Activated CD8-positive, alpha-beta memory T cell treated with anti-CD3 and anti-CD28 coated beads, Interleukin-2, amount 10 ng/mL, durations not matched to agents 7 days and 5 days (primary cell): ENCODE measurements at regions of chr17 and their contacts with region 1.

Region 1: GRCh38 chr17:46002311-46002972 is 3.4 kb downstream of the STH start:
- DNase-seq: peak; percentile 80
- ATAC-seq: peak; percentile 94
- H3K4me3 Mint-ChIP-seq: no peak overlapping the region
- H3K27ac Mint-ChIP-seq: no peak overlapping the region
- H3K4me1 Mint-ChIP-seq: peaks cover 3% of the 10 kb centered on the region
- H3K27me3 Mint-ChIP-seq: no peaks in the 10 kb centered on the region

Region 2: GRCh38 chr17:45902892-45903346 is 99.5 kb before region 1 on chr17:
- CTCF ChIA-PET with region 1: no interaction called
- DNase-seq: no peak
- ATAC-seq: no peak
- H3K4me3 Mint-ChIP-seq: no peak overlapping the region
- H3K27ac Mint-ChIP-seq: no peak overlapping the region
- H3K4me1 Mint-ChIP-seq: peaks cover 14% of the 10 kb centered on the region
- H3K27me3 Mint-ChIP-seq: peaks cover 66% of the 10 kb centered on the region

Region 3: GRCh38 chr17:46020023-46020761 is 17.8 kb after region 1 on chr17:
- CTCF ChIA-PET with region 1: interaction called, 39 read pairs
- DNase-seq: peak; percentile 83
- ATAC-seq: peak; percentile 96
- H3K4me3 Mint-ChIP-seq: no peak overlapping the region
- H3K27ac Mint-ChIP-seq: peak overlapping the region; percentile 85
- H3K4me1 Mint-ChIP-seq: peaks cover 17% of the 10 kb centered on the region
- H3K27me3 Mint-ChIP-seq: no peaks in the 10 kb centered on the region

Region 4: DNA sequence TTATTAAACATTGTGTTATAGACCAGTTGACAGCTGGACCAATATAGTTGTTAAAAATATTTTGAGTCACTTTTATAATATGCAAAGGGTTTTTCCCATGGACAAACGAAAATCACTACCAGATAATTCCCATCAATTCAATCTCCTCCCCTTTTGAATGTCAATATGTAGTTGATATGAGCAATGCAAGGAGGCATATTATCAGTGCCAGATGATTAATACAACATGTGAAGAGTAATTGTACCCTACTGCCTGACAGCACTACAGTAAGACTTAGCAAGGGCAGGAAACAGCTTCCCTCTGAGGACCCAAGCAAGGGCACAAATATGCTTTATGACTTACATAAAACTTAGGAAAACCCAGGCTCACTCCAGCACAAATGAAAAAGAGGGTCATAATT is 173.4 kb after region 1 on chr17:
- CTCF ChIA-PET with region 1: no interaction called
- DNase-seq: no peak
- ATAC-seq: no peak
- H3K4me3 Mint-ChIP-seq: no peak overlapping the region
- H3K27ac Mint-ChIP-seq: no peak overlapping the region
- H3K4me1 Mint-ChIP-seq: peaks cover 56% of the 10 kb centered on the region
- H3K27me3 Mint-ChIP-seq: no peaks in the 10 kb centered on the region